ENCODE measurements at regions of chr15 and their contacts with region 1.

Region 1: GRCh38 chr15:66287461-66288057 is 5.8 kb upstream of the DIS3L start:
- DNase-seq: no peak
- H3K4me3 Mint-ChIP-seq: no peak overlapping the region
- H3K27ac Mint-ChIP-seq: no peak overlapping the region
- H3K4me1 Mint-ChIP-seq: peaks cover 26% of the 10 kb centered on the region
- H3K27me3 Mint-ChIP-seq: no peaks in the 10 kb centered on the region

Region 2: DNA sequence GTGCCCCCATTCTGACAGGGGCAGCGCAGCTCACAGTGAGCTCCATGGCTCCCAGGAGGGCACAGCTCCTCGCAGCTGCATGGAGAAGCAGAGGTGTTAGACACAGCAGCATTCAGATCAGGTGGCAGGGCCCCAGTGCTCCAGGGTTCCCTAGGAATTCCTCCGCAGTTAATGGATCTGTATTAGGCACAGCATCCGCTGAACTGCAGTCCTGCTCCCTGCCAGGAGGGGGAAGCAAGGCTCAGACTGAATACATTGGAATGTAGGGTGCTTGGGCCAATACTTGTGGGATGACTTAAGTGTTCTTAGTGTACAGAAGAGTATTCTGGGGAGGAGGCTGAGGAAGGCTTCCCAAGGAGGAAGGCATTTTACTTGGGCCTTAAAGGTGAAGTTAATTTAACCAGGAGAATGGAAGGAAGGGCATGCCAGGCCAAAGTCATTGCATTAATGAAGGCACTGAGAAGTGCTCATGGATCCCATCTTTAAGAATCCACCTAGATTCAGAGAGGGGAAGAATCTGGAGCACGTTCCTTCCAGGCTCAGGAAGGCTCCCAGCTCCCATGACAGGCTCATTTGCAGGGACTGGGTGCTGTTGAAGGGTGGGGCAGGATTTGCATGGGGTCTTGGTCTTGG is 306.6 kb before region 1 on chr15:
- intact Hi-C with region 1: loop called (anchors 10 kb)
- DNase-seq: peak; percentile 6
- H3K4me3 Mint-ChIP-seq: peak overlapping the region; percentile 16
- H3K27ac Mint-ChIP-seq: no peak overlapping the region
- H3K4me1 Mint-ChIP-seq: no peaks in the 10 kb centered on the region
- H3K27me3 Mint-ChIP-seq: peaks cover 47% of the 10 kb centered on the region